K562 (cell line): ENCODE measurements at regions of chr7 and their contacts with region 1.

Region 1: GRCh38 chr7:102321351-102322177 is 34.7 kb downstream of the SPDYE6 start:
- DNase-seq: peak; percentile 44 to 85 (median 70)
- ATAC-seq: peak; percentile 65
- H3K4me3 ChIP-seq: no peak overlapping the region
- H3K27ac ChIP-seq: no peak overlapping the region
- H3K4me1 ChIP-seq: peaks cover 0 to 28% of the 10 kb centered on the region in 2 experiments; a peak in 3 of 5 replicates
- H3K27me3 ChIP-seq: peaks cover 46 to 79% of the 10 kb centered on the region in 2 experiments
- CTCF ChIP-seq: peak in 1 of 3 experiments; percentile 49; a peak in 1 of 6 replicates
- EP300 ChIP-seq: no peak
- POLR2A ChIP-seq: no peak
- RAD21 ChIP-seq: peak in 1 of 2 experiments; percentile 6; a peak in 1 of 4 replicates

Region 2: GRCh38 chr7:102286237-102287110 is 35.1 kb before region 1 on chr7 and contains the start of gene SH2B2:
- CTCF ChIA-PET with region 1: no interaction called
- POLR2A ChIA-PET with region 1: no interaction called
- in situ Hi-C with region 1: loop called (anchors 5 kb)
- intact Hi-C with region 1: no loop called
- DNase-seq: peak; percentile 84 to 97 (median 94)
- ATAC-seq: peak; percentile 78
- H3K4me3 ChIP-seq: peak within 1 kb of the TSS; percentile 55
- H3K27ac ChIP-seq: peak within 1 kb of the TSS; percentile 41; the same call in 1 of the 3 replicates
- H3K4me1 ChIP-seq: peaks cover 10 to 52% of the 10 kb centered on the region in 2 experiments; a peak in 4 of 5 replicates
- H3K27me3 ChIP-seq: peaks cover 20 to 53% of the 10 kb centered on the region in 2 experiments; a peak in 4 of 5 replicates
- CTCF ChIP-seq: no peak
- EP300 ChIP-seq: no peak
- POLR2A ChIP-seq: peak; percentile 70
- RAD21 ChIP-seq: no peak
- polyA plus RNA-seq, gene SH2B2: not detected

Region 3: GRCh38 chr7:102390697-102391484 is 69.3 kb after region 1 on chr7:
- CTCF ChIA-PET with region 1: no interaction called
- POLR2A ChIA-PET with region 1: no interaction called
- in situ Hi-C with region 1: no loop called
- intact Hi-C with region 1: loop called (anchors 5 kb)
- DNase-seq: peak; percentile 82 to 87 (median 83)
- ATAC-seq: peak; percentile 96
- H3K4me3 ChIP-seq: no peak overlapping the region
- H3K27ac ChIP-seq: no peak overlapping the region
- H3K4me1 ChIP-seq: peaks cover 0 to 4% of the 10 kb centered on the region in 2 experiments; a peak in 2 of 5 replicates
- H3K27me3 ChIP-seq: no peaks in the 10 kb centered on the region
- CTCF ChIP-seq: peak; percentile 94 to 97 (median 96)
- EP300 ChIP-seq: no peak
- POLR2A ChIP-seq: no peak
- RAD21 ChIP-seq: peak; percentile 76 to 87